GM12878 (cell line): ENCODE measurements at regions of chr1 and their contacts with region 1.

Region 1: DNA sequence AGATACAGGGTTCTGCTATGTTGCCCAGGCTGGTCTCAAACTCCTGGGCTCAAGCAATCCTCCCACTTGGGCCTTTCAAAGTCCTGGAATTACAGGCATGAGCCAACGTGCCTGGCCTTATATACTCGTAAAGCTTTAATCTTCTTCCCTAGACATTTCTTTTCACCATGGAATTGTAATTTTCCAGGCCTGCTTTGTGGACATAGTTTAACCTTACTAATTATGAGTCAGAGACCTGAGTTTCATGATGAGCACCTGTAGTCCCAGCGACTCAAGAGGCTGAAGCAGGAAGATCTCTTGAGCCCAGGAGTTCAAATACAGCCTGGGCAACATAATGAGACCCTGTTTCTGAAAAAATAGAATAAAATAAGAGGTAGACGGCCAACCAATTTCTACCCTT is 12.3 kb downstream of the PATJ start:
- DNase-seq: no peak
- ATAC-seq: no peak
- H3K4me3 ChIP-seq: no peak overlapping the region
- H3K27ac ChIP-seq: no peak overlapping the region
- H3K4me1 ChIP-seq: no peaks in the 10 kb centered on the region
- H3K27me3 ChIP-seq: no peaks in the 10 kb centered on the region
- CTCF ChIP-seq: no peak
- EP300 ChIP-seq: no peak
- POLR2A ChIP-seq: no peak
- RAD21 ChIP-seq: no peak

Region 2: GRCh38 chr1:61776091-61776490 is 21.5 kb after region 1 on chr1:
- CTCF ChIA-PET with region 1: no interaction called
- POLR2A ChIA-PET with region 1: no interaction called
- RAD21 ChIA-PET with region 1: no interaction called
- SMC1A ChIA-PET with region 1: no interaction called
- in situ Hi-C with region 1: no loop called
- intact Hi-C with region 1: loop called (anchors 2 kb)
- DNase-seq: no peak
- ATAC-seq: no peak
- H3K4me3 ChIP-seq: no peak overlapping the region
- H3K27ac ChIP-seq: no peak overlapping the region
- H3K4me1 ChIP-seq: no peaks in the 10 kb centered on the region; the same call in 1 of the 2 replicates
- H3K27me3 ChIP-seq: no peaks in the 10 kb centered on the region
- CTCF ChIP-seq: no peak
- EP300 ChIP-seq: no peak
- POLR2A ChIP-seq: no peak
- RAD21 ChIP-seq: no peak

Region 3: DNA sequence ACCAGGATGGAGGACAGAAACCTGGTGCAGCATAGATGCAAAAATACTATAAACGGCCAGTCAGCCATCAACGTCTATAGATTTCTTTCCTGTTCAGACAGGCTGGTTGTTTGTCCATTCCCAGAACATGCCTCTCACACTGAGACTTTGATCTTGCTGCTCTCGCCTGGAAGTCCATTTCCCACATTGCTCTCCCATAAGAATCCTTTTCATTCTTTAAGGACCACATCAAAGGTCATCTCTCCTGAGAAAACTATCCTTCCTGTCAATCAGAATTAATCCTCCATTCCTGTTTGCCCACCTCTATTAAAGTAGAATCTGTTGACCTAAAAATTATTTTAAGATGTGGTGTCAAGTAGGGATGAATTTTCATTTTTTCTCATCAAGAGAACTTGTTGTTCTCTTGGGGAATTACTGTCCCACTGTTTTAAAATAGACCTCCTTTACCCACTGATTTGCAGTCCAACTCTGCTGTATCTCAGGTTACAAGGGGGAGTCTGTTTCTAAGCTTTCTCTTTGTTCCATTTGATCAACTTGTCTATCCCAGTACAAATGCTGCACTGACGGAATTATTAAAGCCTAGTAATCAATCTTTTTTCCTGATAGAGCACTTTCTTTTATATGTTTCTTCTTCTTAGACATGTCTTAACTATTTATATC is 160.4 kb after region 1 on chr1:
- CTCF ChIA-PET with region 1: no interaction called
- POLR2A ChIA-PET with region 1: no interaction called
- RAD21 ChIA-PET with region 1: no interaction called
- SMC1A ChIA-PET with region 1: no interaction called
- in situ Hi-C with region 1: no loop called
- intact Hi-C with region 1: no loop called
- DNase-seq: no peak
- ATAC-seq: no peak
- H3K4me3 ChIP-seq: no peak overlapping the region
- H3K27ac ChIP-seq: no peak overlapping the region
- H3K4me1 ChIP-seq: no peaks in the 10 kb centered on the region
- H3K27me3 ChIP-seq: no peaks in the 10 kb centered on the region
- CTCF ChIP-seq: no peak
- EP300 ChIP-seq: no peak
- POLR2A ChIP-seq: no peak
- RAD21 ChIP-seq: no peak

Region 4: GRCh38 chr1:61950418-61950817 is 195.9 kb after region 1 on chr1:
- CTCF ChIA-PET with region 1: no interaction called
- POLR2A ChIA-PET with region 1: no interaction called
- RAD21 ChIA-PET with region 1: no interaction called
- SMC1A ChIA-PET with region 1: no interaction called
- in situ Hi-C with region 1: no loop called
- intact Hi-C with region 1: no loop called
- DNase-seq: no peak
- ATAC-seq: no peak
- H3K4me3 ChIP-seq: no peak overlapping the region
- H3K27ac ChIP-seq: no peak overlapping the region
- H3K4me1 ChIP-seq: no peaks in the 10 kb centered on the region
- H3K27me3 ChIP-seq: no peaks in the 10 kb centered on the region
- CTCF ChIP-seq: peak in 1 of 3 experiments; percentile 15; a peak in 1 of 6 replicates
- EP300 ChIP-seq: no peak
- POLR2A ChIP-seq: no peak
- RAD21 ChIP-seq: peak; percentile 42; the same call in 1 of the 2 replicates